ENCODE measurements at regions of chr5 and their contacts with region 1.

Region 1: GRCh38 chr5:65925601-65926275 is 637 bp upstream of the ERBIN start:
- DNase-seq: peak; percentile 79
- H3K4me3 Mint-ChIP-seq: peak overlapping the region; percentile 86
- H3K27ac Mint-ChIP-seq: peak overlapping the region; percentile 93
- H3K4me1 Mint-ChIP-seq: peaks cover 24% of the 10 kb centered on the region
- H3K27me3 Mint-ChIP-seq: peaks cover 11% of the 10 kb centered on the region

Region 2: DNA sequence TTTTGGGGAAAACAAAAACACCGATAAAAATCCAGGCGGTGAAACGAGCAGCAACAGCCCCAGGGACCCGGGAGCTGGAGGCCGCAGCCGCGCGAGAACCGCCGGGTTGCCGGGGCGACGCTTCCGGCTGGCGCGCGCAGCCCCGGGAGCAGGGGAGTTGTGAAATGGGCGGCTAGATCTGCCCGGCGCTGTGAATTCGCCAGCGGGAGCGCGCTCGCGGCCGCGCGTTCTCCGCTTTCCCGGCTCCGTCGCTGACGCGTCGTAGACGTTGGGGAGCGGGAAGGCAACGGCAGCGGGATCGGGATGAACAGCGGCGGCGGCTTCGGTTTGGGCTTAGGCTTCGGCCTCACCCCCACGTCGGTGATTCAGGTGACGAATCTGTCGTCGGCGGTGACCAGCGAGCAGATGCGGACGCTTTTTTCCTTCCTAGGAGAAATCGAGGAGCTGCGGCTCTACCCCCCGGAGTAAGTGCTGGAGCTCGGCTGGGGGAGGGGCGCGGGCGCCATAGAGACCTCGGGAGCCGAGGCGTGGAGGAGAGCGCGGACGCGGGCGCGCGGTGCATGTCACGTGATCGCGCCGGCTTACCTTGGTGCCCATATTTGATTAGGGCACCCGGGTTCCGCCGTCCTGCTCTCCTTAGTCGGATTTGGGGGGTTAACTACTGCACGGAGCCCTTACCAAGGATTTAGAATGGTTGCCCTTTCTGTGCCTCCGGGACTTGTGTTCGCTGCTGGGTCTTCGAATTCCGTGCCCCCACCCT is 218.5 kb after region 1 on chr5 and contains the start of gene SREK1:
- CTCF ChIA-PET with region 1: no interaction called
- POLR2A ChIA-PET with region 1: interaction called, 27 read pairs
- DNase-seq: peak; percentile 88
- H3K4me3 Mint-ChIP-seq: peak within 1 kb of the TSS; percentile 97
- H3K27ac Mint-ChIP-seq: peak within 1 kb of the TSS; percentile 99
- H3K4me1 Mint-ChIP-seq: peaks cover 31% of the 10 kb centered on the region
- H3K27me3 Mint-ChIP-seq: no peaks in the 10 kb centered on the region
- total RNA-seq, gene SREK1: 52.3 to 53.4 TPM